Dendritic cell treated with granulocyte-macrophage colony-stimulating factor and Interleukin-4, amounts not matched to agents 40 ng/mL and 50 ng/mL, for 4 days (primary cell): ENCODE measurements at regions of chr17 and their contacts with region 1.

Region 1: DNA sequence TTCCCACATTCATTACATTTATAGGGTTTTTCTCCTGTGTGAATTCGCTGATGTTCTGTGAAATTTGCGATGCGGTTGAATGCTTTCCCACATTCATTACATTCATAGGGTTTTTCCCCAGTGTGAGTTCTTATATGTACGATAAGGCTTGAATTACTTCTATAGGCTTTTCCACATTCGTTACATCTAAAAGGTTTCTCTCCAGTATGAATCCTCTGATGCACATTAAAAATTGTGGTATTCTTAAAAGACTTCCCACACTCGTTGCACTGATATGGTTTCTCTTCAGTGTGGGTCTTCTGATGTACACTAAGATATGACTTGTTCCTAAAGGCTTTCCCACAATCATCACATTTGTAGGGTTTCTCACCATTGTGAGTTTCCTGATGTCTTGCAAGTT is 30.4 kb downstream of the ZNF624 start:
- H3K4me3 Mint-ChIP-seq: no peak overlapping the region
- H3K27ac Mint-ChIP-seq: no peak overlapping the region
- H3K4me1 Mint-ChIP-seq: no peaks in the 10 kb centered on the region
- H3K27me3 Mint-ChIP-seq: no peaks in the 10 kb centered on the region

Region 2: DNA sequence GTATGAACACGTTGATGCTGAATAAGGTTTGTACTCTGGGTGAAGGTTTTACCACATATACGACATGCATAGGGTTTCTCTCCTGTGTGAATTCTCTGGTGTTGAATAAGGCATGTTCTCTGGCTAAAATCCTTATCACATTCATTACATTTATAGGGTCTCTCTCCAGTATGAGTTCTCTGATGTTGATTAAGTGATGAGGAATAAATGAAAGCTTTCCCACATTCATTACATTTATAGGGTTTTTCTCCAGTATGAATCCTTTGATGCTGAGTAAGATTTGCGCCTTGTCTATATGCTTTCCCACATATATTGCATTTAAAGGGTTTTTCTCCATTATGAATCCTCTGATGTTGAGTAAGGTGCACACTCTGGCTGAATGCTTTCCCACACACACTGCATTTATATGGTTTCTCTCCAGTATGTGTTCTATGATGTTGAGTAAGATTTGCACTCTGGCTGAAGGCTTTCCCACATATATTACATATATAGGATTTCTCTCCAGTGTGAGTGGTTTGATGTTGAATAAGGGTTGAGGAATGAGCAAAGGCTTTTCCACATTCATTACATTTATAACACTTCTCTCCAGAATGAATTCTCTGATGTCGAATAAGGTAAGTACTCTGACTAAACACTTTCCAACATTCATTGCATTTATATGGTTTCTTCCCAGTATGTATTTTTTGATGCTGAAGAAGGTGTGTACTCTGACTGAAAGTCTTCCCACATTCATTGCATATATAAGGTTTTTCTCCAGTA is 71.2 kb before region 1 on chr17:
- intact Hi-C with region 1: loop called (anchors 10 kb)
- H3K4me3 Mint-ChIP-seq: no peak overlapping the region
- H3K27ac Mint-ChIP-seq: no peak overlapping the region
- H3K4me1 Mint-ChIP-seq: no peaks in the 10 kb centered on the region
- H3K27me3 Mint-ChIP-seq: no peaks in the 10 kb centered on the region

Region 3: DNA sequence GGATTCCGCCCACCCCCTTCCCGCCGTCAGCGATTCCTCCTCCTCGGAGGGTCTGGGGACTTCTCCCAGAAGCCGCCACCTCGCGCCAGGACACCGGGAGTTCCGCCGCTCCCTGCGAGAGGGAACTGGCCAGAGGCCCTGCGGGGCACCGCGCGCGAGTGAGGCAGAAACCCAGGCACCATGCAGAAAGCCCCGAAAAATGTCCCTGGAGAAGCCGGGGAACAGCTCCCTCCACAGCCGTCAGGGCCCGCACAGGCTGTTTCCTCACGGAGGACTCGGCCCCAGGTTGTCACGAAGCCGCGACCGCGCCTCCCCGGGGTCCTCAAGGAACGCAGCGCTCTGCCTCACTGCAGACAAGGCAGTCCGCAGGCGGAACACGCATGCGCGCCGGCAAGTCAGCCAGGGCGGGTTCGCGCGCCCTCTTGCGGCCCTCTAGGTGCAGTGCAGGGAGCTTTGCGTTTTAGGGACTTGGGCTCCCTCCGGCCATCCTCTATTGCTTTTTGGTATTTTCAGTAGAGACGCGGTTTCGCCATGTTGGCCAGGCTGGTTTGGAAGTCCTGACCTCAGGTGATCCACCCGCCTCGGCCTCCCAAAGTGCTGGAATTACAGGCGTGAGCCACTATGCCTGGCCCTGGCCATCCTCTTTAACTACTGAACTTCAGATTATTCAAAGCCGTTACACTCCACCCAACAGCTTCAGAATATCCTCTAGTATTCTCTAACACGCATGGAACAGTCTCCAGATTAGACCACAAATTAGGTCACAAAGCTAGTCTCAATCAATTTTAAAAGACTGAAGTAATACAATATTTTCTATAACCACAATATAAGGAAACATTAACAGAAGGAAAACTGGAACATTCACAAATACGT is 33.9 kb before region 1 on chr17:
- intact Hi-C with region 1: no loop called
- H3K4me3 Mint-ChIP-seq: peak overlapping the region; percentile 75
- H3K27ac Mint-ChIP-seq: peak overlapping the region; percentile 59
- H3K4me1 Mint-ChIP-seq: peaks cover 25% of the 10 kb centered on the region
- H3K27me3 Mint-ChIP-seq: peaks cover 36% of the 10 kb centered on the region